ENCODE measurements at regions of chr16 and their contacts with region 1.

Region 1: DNA sequence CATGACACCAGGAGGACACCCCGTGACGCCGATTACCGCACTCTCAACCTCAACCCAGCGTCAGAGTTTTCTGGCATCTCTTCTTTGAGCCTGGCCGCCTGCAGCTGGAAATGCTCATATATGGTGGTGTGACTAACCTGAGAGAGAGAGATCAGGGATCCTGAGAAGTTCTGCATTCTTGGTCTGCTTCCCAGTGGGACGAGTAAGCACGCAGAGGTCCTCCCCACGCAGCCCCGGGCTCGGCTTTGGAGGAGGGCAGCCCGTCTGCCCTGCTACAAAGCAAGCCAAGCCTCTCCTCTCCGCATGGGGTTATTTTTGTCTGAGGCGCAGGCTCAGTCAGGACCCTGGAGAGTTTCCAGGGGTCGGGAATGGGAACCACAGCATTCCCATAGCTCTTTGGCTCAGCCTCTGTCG is 16.5 kb downstream of the CRISPLD2 start:
- DNase-seq: peak; percentile 94
- H3K4me3 ChIP-seq: no peak overlapping the region
- H3K27ac ChIP-seq: no peak overlapping the region
- H3K4me1 ChIP-seq: peaks cover 17% of the 10 kb centered on the region
- H3K27me3 ChIP-seq: no peaks in the 10 kb centered on the region
- CTCF ChIP-seq: no peak

Region 2: GRCh38 chr16:84511180-84511824 is 324.9 kb before region 1 on chr16:
- CTCF ChIA-PET with region 1: no interaction called
- dilution Hi-C with region 1: no loop called
- in situ Hi-C with region 1: no loop called
- intact Hi-C with region 1: no loop called
- DNase-seq: peak; percentile 72
- H3K4me3 ChIP-seq: no peak overlapping the region
- H3K27ac ChIP-seq: no peak overlapping the region
- H3K4me1 ChIP-seq: peaks cover 4% of the 10 kb centered on the region
- H3K27me3 ChIP-seq: no peaks in the 10 kb centered on the region
- CTCF ChIP-seq: peak; percentile 90 to 94

Region 3: DNA sequence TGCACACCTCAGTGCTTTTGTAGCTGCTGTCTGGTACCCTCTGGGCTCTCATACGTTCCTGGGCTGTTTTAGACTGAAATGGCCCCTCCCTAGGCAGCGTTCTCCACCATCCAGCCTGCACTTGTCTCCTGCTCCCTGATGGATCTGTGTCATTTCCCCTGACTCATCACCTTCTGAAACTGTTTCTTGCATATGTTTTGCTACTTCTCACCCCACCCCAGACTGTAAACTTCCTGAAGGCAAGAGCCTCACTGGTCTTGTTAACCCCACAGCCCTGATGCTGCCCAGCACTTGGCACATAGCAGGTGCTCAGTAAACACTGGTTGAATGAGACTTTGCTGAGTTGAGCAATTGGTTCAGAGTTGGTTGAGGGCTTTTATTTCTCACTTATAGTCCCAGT is 62.2 kb after region 1 on chr16:
- CTCF ChIA-PET with region 1: no interaction called
- dilution Hi-C with region 1: no loop called
- in situ Hi-C with region 1: no loop called
- intact Hi-C with region 1: loop called (anchors 5 kb)
- DNase-seq: peak; percentile 71
- H3K4me3 ChIP-seq: no peak overlapping the region
- H3K27ac ChIP-seq: no peak overlapping the region
- H3K4me1 ChIP-seq: peaks cover 15% of the 10 kb centered on the region
- H3K27me3 ChIP-seq: no peaks in the 10 kb centered on the region
- CTCF ChIP-seq: no peak

Measured in mammary epithelial cell (primary cell).